Dorsolateral prefrontal cortex (tissue), 120 donors: ENCODE measurements at regions of chr18 and their contacts with region 1.

Region 1: GRCh38 chr18:61085761-61086160 is 247.5 kb upstream of the CDH20 start:
- DNase-seq: no peak
- H3K4me3 ChIP-seq: no peak overlapping the region
- H3K27ac ChIP-seq: peak overlapping the region in 2 of 59 donors; percentile 2 to 21
- H3K27me3 ChIP-seq: no peaks in the 10 kb centered on the region
- CTCF ChIP-seq: no peak

Region 2: GRCh38 chr18:61039251-61039650 is 46.5 kb before region 1 on chr18:
- intact Hi-C with region 1: loop called in 1 of 2 experiments (anchors 5 kb)
- DNase-seq: peak in 1 of 10 donors; percentile 54
- H3K4me3 ChIP-seq: no peak overlapping the region
- H3K27ac ChIP-seq: no peak overlapping the region
- H3K27me3 ChIP-seq: no peaks in the 10 kb centered on the region
- CTCF ChIP-seq: no peak

Region 3: GRCh38 chr18:61651883-61652268 is 566.1 kb after region 1 on chr18:
- intact Hi-C with region 1: no loop called
- DNase-seq: no peak
- H3K4me3 ChIP-seq: no peak overlapping the region
- H3K27ac ChIP-seq: no peak overlapping the region
- H3K27me3 ChIP-seq: no peaks in the 10 kb centered on the region
- CTCF ChIP-seq: no peak